Heart right ventricle (tissue), 16 donors: ENCODE measurements at regions of chr15 and their contacts with region 1.

Region 1: GRCh38 chr15:99104788-99105513 is at the start of gene SYNM:
- DNase-seq: peak; percentile 72 to 85
- ATAC-seq: peak; percentile 75 to 86 (median 84)
- H3K4me3 ChIP-seq: peak within 1 kb of the TSS; percentile 49 to 81 (median 72)
- H3K27ac ChIP-seq: peak within 1 kb of the TSS; percentile 57 to 95 (median 92)
- H3K4me1 ChIP-seq: peaks cover 0 to 51% (median 27%) of the 10 kb centered on the region in 9 donors
- H3K27me3 ChIP-seq: peaks cover 0 to 66% (median 10%) of the 10 kb centered on the region in 7 donors
- CTCF ChIP-seq: peak; percentile 75 to 95 (median 88)
- total RNA-seq, gene SYNM: 256 to 456 (median 357) TPM

Region 2: DNA sequence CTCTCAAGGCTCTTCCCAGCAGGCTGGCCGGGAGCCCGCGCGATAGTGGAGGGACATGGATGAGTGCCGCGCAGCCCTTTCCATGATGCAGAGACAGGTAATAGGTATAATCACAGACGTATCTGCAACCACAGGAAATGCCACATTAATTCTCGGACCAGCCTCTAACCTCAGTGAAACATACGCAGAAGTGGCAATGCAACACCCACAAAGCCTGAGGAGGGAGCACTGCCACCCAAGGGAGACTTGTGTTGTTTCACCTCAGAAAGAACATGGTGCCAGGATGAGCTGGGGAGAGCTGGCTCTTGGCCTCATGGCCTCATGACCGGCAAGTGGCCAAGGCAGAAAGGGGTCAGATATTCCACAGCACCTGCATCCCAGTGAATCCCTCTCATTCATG is 136.4 kb before region 1 on chr15:
- intact Hi-C with region 1: no loop called
- DNase-seq: no peak
- ATAC-seq: no peak
- H3K4me3 ChIP-seq: no peak overlapping the region
- H3K27ac ChIP-seq: no peak overlapping the region
- H3K4me1 ChIP-seq: peaks cover 0 to 8% (median 0%) of the 10 kb centered on the region in 9 donors
- H3K27me3 ChIP-seq: no peaks in the 10 kb centered on the region
- CTCF ChIP-seq: no peak

Region 3: GRCh38 chr15:99143655-99144610 is 39.0 kb after region 1 on chr15:
- intact Hi-C with region 1: loop called in 2 of 10 experiments (anchors 5 kb)
- DNase-seq: peak in 1 of 2 donors; percentile 63
- ATAC-seq: peak in 7 of 8 donors; percentile 50 to 90 (median 59)
- H3K4me3 ChIP-seq: no peak overlapping the region
- H3K27ac ChIP-seq: peak overlapping the region in 4 of 10 donors; percentile 12 to 54 (median 16)
- H3K4me1 ChIP-seq: peaks cover 0 to 34% (median 18%) of the 10 kb centered on the region in 9 donors
- H3K27me3 ChIP-seq: no peaks in the 10 kb centered on the region
- CTCF ChIP-seq: no peak

Region 4: GRCh38 chr15:99169769-99170311 is 64.9 kb after region 1 on chr15:
- intact Hi-C with region 1: loop called in 2 of 10 experiments (anchors 5 kb)
- DNase-seq: no peak
- ATAC-seq: peak in 7 of 8 donors; percentile 14 to 69 (median 48)
- H3K4me3 ChIP-seq: no peak overlapping the region
- H3K27ac ChIP-seq: peak overlapping the region; percentile 41 to 85 (median 80)
- H3K4me1 ChIP-seq: peaks cover 5 to 64% (median 31%) of the 10 kb centered on the region in 9 donors
- H3K27me3 ChIP-seq: no peaks in the 10 kb centered on the region
- CTCF ChIP-seq: no peak

Region 5: GRCh38 chr15:99181545-99181971 is 76.6 kb after region 1 on chr15:
- intact Hi-C with region 1: loop called in 1 of 10 experiments (anchors 2 kb)
- DNase-seq: peak; percentile 42 to 64
- ATAC-seq: peak; percentile 69 to 91 (median 83)
- H3K4me3 ChIP-seq: peak overlapping the region in 1 of 10 donors; percentile 5
- H3K27ac ChIP-seq: peak overlapping the region; percentile 38 to 86 (median 76)
- H3K4me1 ChIP-seq: peaks cover 0 to 48% (median 26%) of the 10 kb centered on the region in 9 donors
- H3K27me3 ChIP-seq: no peaks in the 10 kb centered on the region
- CTCF ChIP-seq: no peak

Region 6: DNA sequence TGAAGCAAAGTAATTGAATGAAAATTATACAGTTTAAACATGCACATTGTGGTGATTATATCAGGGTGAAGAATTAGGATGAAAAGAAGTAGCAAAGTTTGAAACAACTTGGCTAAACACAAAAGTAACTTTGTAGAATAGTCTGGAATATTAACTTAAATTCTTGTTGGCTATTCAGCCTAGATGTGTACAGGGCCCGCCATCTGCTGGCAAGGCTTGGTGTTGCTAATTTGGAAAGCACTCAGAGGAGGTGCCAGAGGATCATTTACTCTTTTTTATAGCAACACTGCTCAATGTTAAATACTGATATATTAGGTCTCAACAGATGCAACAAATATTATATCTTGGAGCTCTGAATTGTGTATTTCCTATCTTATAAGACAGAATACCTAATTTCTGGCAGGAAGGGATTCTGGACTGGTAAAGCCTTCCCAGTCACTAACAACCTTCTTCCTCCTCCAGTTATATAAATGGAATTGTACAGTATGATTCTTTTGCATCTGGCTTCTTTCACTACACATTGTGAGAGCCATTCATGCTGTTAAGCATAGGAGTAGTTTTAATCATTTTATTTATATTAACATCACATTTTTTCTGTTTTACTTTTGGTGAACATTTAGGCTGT is 108.3 kb after region 1 on chr15:
- intact Hi-C with region 1: loop called (anchors 1 to 5 kb)
- DNase-seq: peak; percentile 77 to 84
- ATAC-seq: peak; percentile 74 to 91 (median 86)
- H3K4me3 ChIP-seq: no peak overlapping the region
- H3K27ac ChIP-seq: peak overlapping the region in 7 of 10 donors; percentile 7 to 80 (median 42)
- H3K4me1 ChIP-seq: peaks cover 0 to 23% (median 9%) of the 10 kb centered on the region in 9 donors
- H3K27me3 ChIP-seq: no peaks in the 10 kb centered on the region
- CTCF ChIP-seq: peak; percentile 80 to 96 (median 94)

Region 7: GRCh38 chr15:99733268-99734039 is 628.5 kb after region 1 on chr15 and contains the start of gene LYSMD4:
- intact Hi-C with region 1: loop called in 1 of 10 experiments (anchors 10 kb)
- DNase-seq: peak; percentile 99
- ATAC-seq: peak; percentile 98 to 99 (median 99)
- H3K4me3 ChIP-seq: peak within 1 kb of the TSS; percentile 63 to 100 (median 92)
- H3K27ac ChIP-seq: peak within 1 kb of the TSS; percentile 54 to 91 (median 88)
- H3K4me1 ChIP-seq: peaks cover 0 to 44% (median 26%) of the 10 kb centered on the region in 9 donors
- H3K27me3 ChIP-seq: no peaks in the 10 kb centered on the region
- CTCF ChIP-seq: no peak
- total RNA-seq, gene LYSMD4: 7.0 to 13.4 (median 11.9) TPM